H1 (cell line): ENCODE measurements at regions of chr3 and their contacts with region 1.

Region 1: DNA sequence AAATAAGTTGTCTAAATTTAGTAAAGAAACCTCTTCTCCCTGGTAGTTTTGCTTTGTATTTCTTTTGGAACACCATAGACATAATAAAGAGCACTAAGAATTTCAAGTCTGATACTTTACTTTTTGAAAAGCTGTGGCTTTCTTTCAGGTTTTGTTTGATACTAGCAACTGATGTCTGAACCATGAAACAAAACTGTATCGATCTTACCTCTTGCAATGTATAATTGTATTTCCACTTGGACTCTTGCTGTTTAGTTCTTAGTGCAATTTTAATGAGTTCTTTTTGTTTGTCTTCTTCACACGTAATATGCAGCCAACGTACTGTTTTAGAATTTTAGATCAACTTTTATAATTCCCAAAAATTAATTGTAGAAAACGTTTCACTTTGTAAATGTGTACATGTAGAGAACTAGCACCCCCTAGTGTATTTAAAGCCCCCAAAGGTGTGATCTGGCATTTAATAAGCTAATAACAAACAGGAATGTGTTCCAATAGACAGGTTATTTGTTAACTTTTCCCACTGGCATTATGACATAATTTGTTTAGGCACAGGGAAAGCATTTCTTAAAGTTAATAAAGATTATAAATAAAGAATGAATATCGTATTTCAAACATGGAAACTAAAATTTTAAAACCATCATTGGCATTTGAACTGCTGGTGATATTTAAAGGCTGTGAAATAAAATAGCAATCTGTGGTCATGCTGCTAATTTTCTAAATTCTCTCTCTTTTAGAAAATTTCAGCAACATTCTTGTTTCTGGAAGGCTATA is 289.1 kb upstream of the DNAJC19 start:
- DNase-seq: no peak
- H3K4me3 ChIP-seq: no peak overlapping the region
- H3K27ac ChIP-seq: no peak overlapping the region
- H3K4me1 ChIP-seq: no peaks in the 10 kb centered on the region
- H3K27me3 ChIP-seq: no peaks in the 10 kb centered on the region
- CTCF ChIP-seq: peak in 2 of 3 experiments; percentile 6 to 23; a peak in 2 of 4 replicates
- EP300 ChIP-seq: no peak
- POLR2A ChIP-seq: no peak
- RAD21 ChIP-seq: peak; percentile 57 to 66

Region 2: GRCh38 chr3:181210275-181210674 is 68.4 kb before region 1 on chr3:
- CTCF ChIA-PET with region 1: interaction called, 20 read pairs
- POLR2A ChIA-PET with region 1: no interaction called
- DNase-seq: no peak
- H3K4me3 ChIP-seq: no peak overlapping the region
- H3K27ac ChIP-seq: no peak overlapping the region
- H3K4me1 ChIP-seq: no peaks in the 10 kb centered on the region
- H3K27me3 ChIP-seq: no peaks in the 10 kb centered on the region
- CTCF ChIP-seq: peak in 2 of 3 experiments; percentile 14 to 20; a peak in 2 of 4 replicates
- EP300 ChIP-seq: no peak
- POLR2A ChIP-seq: no peak
- RAD21 ChIP-seq: peak; percentile 57 to 62

Region 3: GRCh38 chr3:181230258-181230657 is 48.4 kb before region 1 on chr3:
- CTCF ChIA-PET with region 1: interaction called, 11 read pairs
- POLR2A ChIA-PET with region 1: no interaction called
- DNase-seq: peak; percentile 27 to 62
- H3K4me3 ChIP-seq: no peak overlapping the region
- H3K27ac ChIP-seq: no peak overlapping the region; the same call in 1 of the 2 replicates
- H3K4me1 ChIP-seq: no peaks in the 10 kb centered on the region
- H3K27me3 ChIP-seq: no peaks in the 10 kb centered on the region
- CTCF ChIP-seq: peak; percentile 42 to 73 (median 52)
- EP300 ChIP-seq: no peak
- POLR2A ChIP-seq: no peak
- RAD21 ChIP-seq: peak; percentile 49 to 50; a peak in 3 of 4 replicates

Region 4: DNA sequence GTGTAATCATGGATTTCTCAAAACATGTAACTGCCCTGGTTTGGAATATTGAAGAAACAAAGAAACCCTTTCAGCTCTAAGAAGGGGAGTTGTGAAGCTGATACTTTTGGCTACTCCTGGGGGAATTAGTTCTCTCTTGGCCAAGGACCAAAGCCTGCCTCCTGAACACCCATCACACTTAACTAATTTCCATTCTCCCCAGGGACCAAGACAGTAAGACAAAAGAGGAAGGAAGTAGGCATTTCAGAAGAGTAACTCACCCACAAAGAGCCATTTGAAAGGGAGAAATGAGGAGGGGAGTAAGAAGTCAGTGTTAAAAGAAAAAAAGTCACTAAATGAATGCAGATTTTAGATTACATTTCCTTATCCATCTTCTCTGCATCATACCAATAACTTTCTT is 105.1 kb after region 1 on chr3:
- CTCF ChIA-PET with region 1: no interaction called
- POLR2A ChIA-PET with region 1: no interaction called
- DNase-seq: no peak
- H3K4me3 ChIP-seq: peak overlapping the region in 1 of 4 experiments; percentile 17; a peak in 1 of 8 replicates
- H3K27ac ChIP-seq: no peak overlapping the region
- H3K4me1 ChIP-seq: peaks cover 2 to 10% (median 7%) of the 10 kb centered on the region in 4 experiments; a peak in 5 of 7 replicates
- H3K27me3 ChIP-seq: no peaks in the 10 kb centered on the region
- CTCF ChIP-seq: no peak
- EP300 ChIP-seq: no peak
- POLR2A ChIP-seq: no peak
- RAD21 ChIP-seq: no peak